HAP-1 (cell line): ENCODE measurements at regions of chr1 and their contacts with region 1.

Region 1: DNA sequence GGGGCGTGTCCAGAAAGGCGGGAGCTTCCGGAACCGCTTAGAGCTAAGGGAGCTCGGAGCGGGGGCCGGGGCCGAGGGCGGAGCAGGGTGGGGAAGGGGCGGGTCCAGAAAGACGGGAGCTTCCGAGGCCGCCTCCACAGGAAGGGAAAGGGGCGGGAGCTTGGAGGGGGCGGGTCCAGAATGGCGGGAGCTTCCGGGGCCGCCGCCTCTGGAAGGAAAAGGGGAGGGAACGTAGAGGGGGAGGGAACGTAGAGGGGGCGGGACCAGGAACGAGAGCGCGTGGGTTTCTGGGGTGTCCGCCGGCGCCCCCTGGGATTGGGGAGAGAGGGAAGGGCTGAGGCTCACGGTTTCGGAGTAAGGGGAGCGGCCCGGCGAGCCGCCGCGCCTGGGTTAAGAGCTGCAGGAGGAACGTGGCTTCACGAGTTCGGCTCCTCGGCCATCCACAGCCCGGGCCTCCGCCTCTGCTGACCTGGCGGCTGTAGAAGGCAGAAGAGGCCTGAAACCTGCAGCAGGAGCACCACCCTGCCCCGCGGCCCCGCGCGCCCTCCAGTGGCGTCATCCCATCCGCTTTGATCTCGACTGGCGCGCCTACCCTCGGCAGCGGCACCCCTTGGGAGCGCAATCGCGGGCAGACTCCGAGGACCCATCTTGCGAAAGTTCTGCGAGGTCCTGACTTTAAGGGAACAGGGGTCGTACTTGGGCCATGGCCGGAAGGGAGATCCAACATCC is 22.9 kb upstream of the HPDL start:
- DNase-seq: peak; percentile 90 to 99
- H3K4me3 ChIP-seq: peak overlapping the region; percentile 70
- H3K4me1 ChIP-seq: peaks cover 17% of the 10 kb centered on the region
- H3K27me3 ChIP-seq: no peaks in the 10 kb centered on the region

Region 2: GRCh38 chr1:44714944-44715571 is 588.7 kb before region 1 on chr1:
- in situ Hi-C with region 1: loop called (anchors 25 kb)
- DNase-seq: peak; percentile 59 to 80
- H3K4me3 ChIP-seq: no peak overlapping the region
- H3K4me1 ChIP-seq: no peaks in the 10 kb centered on the region
- H3K27me3 ChIP-seq: peaks cover 14% of the 10 kb centered on the region

Region 3: DNA sequence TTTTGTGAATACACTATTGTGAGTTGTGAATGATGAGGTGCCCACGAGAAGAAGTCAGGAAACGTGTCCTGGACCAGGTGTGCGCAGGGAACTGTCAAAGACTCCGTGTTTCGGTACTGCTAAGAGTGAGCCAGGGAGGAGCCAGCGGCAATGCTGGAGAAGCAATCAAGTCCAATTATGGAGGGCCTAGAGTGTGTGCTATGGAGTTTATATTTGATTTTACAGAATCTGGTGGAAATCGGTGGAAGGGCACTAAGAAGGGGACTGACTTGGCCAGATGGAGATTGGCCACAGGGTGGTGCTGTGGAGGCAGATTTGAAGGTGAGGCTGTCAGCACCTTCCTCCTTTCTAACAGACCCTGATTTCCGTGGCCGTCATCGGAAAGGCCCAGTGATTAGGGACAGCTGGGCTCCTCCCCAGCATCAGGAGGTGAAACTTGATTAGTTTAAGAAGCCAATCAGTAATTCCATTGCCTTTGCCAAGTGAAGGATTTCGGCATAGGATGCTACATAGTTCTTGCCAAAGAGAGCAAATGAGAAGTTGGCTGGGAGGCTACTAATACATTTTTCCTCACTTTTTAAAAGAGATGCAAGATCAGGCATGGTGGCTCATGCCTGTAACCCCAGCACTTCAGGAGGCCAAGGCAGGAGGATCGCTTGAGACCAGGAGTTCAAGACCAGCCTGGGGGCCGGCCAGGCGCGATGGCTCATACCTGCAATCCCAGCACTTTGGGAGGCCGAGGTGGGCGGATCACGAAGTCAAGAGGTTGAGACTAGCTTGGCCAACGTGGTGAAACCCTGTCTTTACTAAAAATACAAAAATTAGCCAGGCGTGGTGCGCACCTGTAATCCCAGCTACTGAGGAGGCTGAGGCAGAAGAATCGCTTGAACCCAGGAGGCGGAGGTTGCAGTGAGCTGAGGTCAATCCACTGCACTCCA is 467.7 kb before region 1 on chr1:
- in situ Hi-C with region 1: loop called (anchors 10 kb)
- DNase-seq: peak; percentile 75 to 96
- H3K4me3 ChIP-seq: no peak overlapping the region
- H3K4me1 ChIP-seq: no peaks in the 10 kb centered on the region
- H3K27me3 ChIP-seq: no peaks in the 10 kb centered on the region